OCI-LY7 (cell line): ENCODE measurements at regions of chr1 and their contacts with region 1.

Region 1: GRCh38 chr1:110674337-110675059 is at the start of gene KCNA3:
- DNase-seq: peak; percentile 79
- H3K4me3 ChIP-seq: peak within 1 kb of the TSS; percentile 84
- H3K27ac ChIP-seq: peak within 1 kb of the TSS; percentile 97
- H3K4me1 ChIP-seq: peaks cover 29% of the 10 kb centered on the region
- CTCF ChIP-seq: peak; percentile 69
- total RNA-seq, gene KCNA3: 46.2 and 58.0 TPM in 2 replicates

Region 2: GRCh38 chr1:110338886-110339406 is 335.6 kb before region 1 on chr1 and contains the start of gene RBM15:
- CTCF ChIA-PET with region 1: no interaction called
- POLR2A ChIA-PET with region 1: interaction called, 3 read pairs
- intact Hi-C with region 1: loop called (anchors 2 kb)
- DNase-seq: peak; percentile 100
- H3K4me3 ChIP-seq: peak within 1 kb of the TSS; percentile 93
- H3K27ac ChIP-seq: peak within 1 kb of the TSS; percentile 92
- H3K4me1 ChIP-seq: peaks cover 28% of the 10 kb centered on the region
- CTCF ChIP-seq: no peak
- total RNA-seq, gene RBM15: 221 and 231 TPM in 2 replicates

Region 3: GRCh38 chr1:110639724-110640386 is 34.6 kb before region 1 on chr1:
- CTCF ChIA-PET with region 1: interaction called, 7 read pairs
- POLR2A ChIA-PET with region 1: interaction called, 56 read pairs
- intact Hi-C with region 1: loop called (anchors 1 kb)
- DNase-seq: no peak
- H3K4me3 ChIP-seq: no peak overlapping the region
- H3K27ac ChIP-seq: no peak overlapping the region
- H3K4me1 ChIP-seq: peaks cover 72% of the 10 kb centered on the region
- CTCF ChIP-seq: no peak

Region 4: GRCh38 chr1:110714374-110714995 is 40.0 kb after region 1 on chr1:
- CTCF ChIA-PET with region 1: no interaction called
- POLR2A ChIA-PET with region 1: no interaction called
- intact Hi-C with region 1: no loop called
- DNase-seq: no peak
- H3K4me3 ChIP-seq: no peak overlapping the region
- H3K27ac ChIP-seq: no peak overlapping the region
- H3K4me1 ChIP-seq: no peaks in the 10 kb centered on the region
- CTCF ChIP-seq: no peak

Region 5: GRCh38 chr1:110766025-110766647 is 91.6 kb after region 1 on chr1:
- CTCF ChIA-PET with region 1: interaction called, 3 read pairs
- POLR2A ChIA-PET with region 1: interaction called, 8 read pairs
- intact Hi-C with region 1: loop called (anchors 1 kb)
- DNase-seq: peak; percentile 82
- H3K4me3 ChIP-seq: peak overlapping the region; percentile 24
- H3K27ac ChIP-seq: no peak overlapping the region
- H3K4me1 ChIP-seq: peaks cover 14% of the 10 kb centered on the region
- CTCF ChIP-seq: peak; percentile 99

Region 6: GRCh38 chr1:111127923-111128643 is 453.6 kb after region 1 on chr1:
- CTCF ChIA-PET with region 1: no interaction called
- POLR2A ChIA-PET with region 1: interaction called, 3 read pairs
- intact Hi-C with region 1: loop called (anchors 10 kb)
- DNase-seq: peak; percentile 91
- H3K4me3 ChIP-seq: peak overlapping the region; percentile 65
- H3K27ac ChIP-seq: peak overlapping the region; percentile 98
- H3K4me1 ChIP-seq: peaks cover 95% of the 10 kb centered on the region
- CTCF ChIP-seq: no peak